ENCODE measurements at regions of chr10 and their contacts with region 1.

Region 1: GRCh38 chr10:5813287-5814109 is at the start of gene GDI2:
- DNase-seq: peak; percentile 89
- ATAC-seq: peak; percentile 93
- H3K4me3 ChIP-seq: peak within 1 kb of the TSS; percentile 96
- H3K27ac ChIP-seq: peak within 1 kb of the TSS; percentile 82
- H3K4me1 ChIP-seq: peaks cover 26% of the 10 kb centered on the region
- H3K27me3 ChIP-seq: no peaks in the 10 kb centered on the region
- CTCF ChIP-seq: no peak
- total RNA-seq, gene GDI2: 94.7 and 122 TPM in 2 replicates

Region 2: DNA sequence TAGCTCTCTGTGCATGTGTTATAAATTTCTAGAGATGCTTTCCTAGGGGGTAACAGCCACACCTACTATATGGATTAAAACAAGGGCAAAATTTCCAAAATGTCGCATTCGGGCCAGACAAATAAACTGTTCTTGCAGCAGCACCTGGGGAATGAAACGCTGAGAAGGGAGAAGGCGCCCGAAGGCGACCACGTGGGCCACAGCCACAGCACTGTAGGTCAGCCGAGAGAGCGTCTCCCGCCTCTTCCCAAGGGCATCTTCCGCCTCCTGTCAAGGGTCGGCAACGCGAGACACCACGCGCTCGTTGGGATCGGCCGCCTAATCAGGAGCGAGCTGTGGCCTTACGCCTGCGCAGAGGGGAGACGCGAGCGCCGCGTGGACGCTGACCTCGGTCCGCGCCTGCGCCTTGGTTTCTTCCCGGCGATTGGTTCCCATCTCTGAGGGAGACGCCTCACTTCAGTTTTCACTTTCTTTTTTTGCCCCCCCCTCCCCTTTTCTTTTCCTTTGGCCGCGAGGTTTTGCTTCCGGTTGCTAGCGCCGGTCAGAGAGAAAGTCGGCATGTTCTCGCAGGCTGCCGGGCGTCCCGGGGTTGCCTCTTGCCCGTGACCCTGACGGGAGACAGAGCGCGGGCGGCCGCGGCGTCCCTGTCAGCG is 129.1 kb before region 1 on chr10 and contains the start of gene TASOR2:
- CTCF ChIA-PET with region 1: no interaction called
- POLR2A ChIA-PET with region 1: no interaction called
- intact Hi-C with region 1: loop called (anchors 5 kb)
- DNase-seq: peak; percentile 88
- ATAC-seq: peak; percentile 84
- H3K4me3 ChIP-seq: peak within 1 kb of the TSS; percentile 84
- H3K27ac ChIP-seq: peak within 1 kb of the TSS; percentile 73
- H3K4me1 ChIP-seq: peaks cover 12% of the 10 kb centered on the region; the same call in 1 of the 2 replicates
- H3K27me3 ChIP-seq: no peaks in the 10 kb centered on the region
- CTCF ChIP-seq: no peak
- total RNA-seq, gene TASOR2: 47.3 and 52.9 TPM in 2 replicates

Region 3: DNA sequence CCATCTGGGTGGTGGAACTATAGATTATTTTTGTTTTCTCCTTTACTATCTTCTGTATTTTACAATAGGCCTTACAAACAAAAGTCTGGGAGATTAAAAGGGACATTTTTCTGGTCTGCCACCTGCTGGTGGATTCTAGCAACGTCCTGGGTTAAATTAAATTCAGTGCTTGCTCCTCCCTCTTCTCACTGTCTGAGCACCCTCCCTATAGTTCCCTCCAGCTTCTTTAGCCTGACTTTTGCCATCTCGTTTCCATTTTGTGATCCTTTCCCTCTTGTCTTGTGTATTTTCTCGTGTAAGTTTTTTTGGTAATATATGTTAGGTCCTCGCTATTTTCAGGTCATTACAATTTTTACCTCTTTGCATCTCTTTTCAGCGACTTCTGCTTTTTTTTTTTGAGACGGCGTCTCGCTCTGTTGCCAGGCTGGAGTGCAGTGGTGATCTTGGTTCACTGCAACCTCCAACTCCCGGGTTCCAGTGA is 60.1 kb after region 1 on chr10:
- CTCF ChIA-PET with region 1: no interaction called
- POLR2A ChIA-PET with region 1: no interaction called
- intact Hi-C with region 1: loop called (anchors 2 kb)
- DNase-seq: peak; percentile 59
- ATAC-seq: peak; percentile 66
- H3K4me3 ChIP-seq: no peak overlapping the region
- H3K27ac ChIP-seq: no peak overlapping the region
- H3K4me1 ChIP-seq: peaks cover 3% of the 10 kb centered on the region; the same call in 1 of the 2 replicates
- H3K27me3 ChIP-seq: no peaks in the 10 kb centered on the region
- CTCF ChIP-seq: peak; percentile 57